ENCODE measurements at regions of chr17 and their contacts with region 1.

Region 1: DNA sequence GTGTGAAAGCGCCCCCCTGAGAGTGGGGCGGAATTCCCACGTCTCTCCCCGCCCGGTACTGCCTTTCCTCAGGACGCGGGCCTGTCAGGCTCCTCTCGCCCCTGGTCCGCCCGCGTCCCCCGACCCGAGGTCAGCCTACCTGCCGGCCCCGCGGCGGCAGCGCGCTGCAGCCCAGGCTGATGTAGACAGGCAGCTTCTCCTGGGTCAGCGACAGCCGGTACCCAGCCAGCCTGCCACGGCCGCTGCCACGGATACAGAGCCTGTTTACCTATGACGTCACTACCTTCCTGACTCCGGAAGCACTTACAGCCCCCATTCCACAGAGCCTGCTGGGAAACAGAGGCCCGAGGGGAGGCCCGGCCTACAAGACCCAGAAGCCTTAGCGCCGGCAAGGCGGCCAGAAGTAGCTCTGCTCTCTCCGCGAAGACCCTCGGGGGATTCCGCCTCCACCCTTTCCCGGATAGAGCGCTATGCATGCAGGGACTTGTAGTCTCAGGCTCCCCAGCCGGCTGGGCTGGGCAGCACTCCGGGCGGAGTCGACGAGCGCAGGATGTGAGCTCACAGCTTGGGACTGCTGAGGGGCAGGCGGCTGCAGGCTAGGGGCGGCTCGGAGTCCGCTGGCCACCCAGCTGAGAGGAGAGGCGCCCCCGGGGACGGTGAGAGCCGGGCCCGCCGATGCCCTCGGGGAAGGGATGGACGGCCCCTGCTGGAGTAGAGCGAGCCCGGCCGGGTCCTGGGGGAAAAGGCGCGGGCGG is at the starts of genes IFT20 and TNFAIP1:
- DNase-seq: peak; percentile 86 to 100 (median 98)
- ATAC-seq: peak; percentile 98
- H3K4me3 ChIP-seq: peak within 1 kb of the TSS; percentile 79
- H3K4me3 Mint-ChIP-seq: peak within 1 kb of the TSS; percentile 86 to 99 (median 97)
- H3K27ac ChIP-seq: peak within 1 kb of the TSS; percentile 95
- H3K27ac Mint-ChIP-seq: peak within 1 kb of the TSS; percentile 91 to 98 (median 97)
- H3K4me1 ChIP-seq: peaks cover 16 to 19% of the 10 kb centered on the region in 2 donors
- H3K4me1 Mint-ChIP-seq: peaks cover 31 to 63% (median 59%) of the 10 kb centered on the region in 7 donors
- H3K27me3 ChIP-seq: no peaks in the 10 kb centered on the region
- H3K27me3 Mint-ChIP-seq: no peaks in the 10 kb centered on the region
- total RNA-seq, gene IFT20: 24.7 to 56.2 (median 37.0) TPM
- total RNA-seq, gene TNFAIP1: 8.0 to 26.9 (median 25.9) TPM

Region 2: GRCh38 chr17:28272166-28272565 is 63.2 kb before region 1 on chr17:
- CTCF ChIA-PET with region 1: no interaction called
- POLR2A ChIA-PET with region 1: no interaction called
- intact Hi-C with region 1: no loop called
- DNase-seq: no peak
- ATAC-seq: no peak
- H3K4me3 ChIP-seq: no peak overlapping the region
- H3K4me3 Mint-ChIP-seq: no peak overlapping the region
- H3K27ac ChIP-seq: no peak overlapping the region
- H3K27ac Mint-ChIP-seq: no peak overlapping the region
- H3K4me1 ChIP-seq: peaks cover 0 to 2% of the 10 kb centered on the region in 2 donors
- H3K4me1 Mint-ChIP-seq: peaks cover 0 to 7% (median 3%) of the 10 kb centered on the region in 7 donors
- H3K27me3 ChIP-seq: no peaks in the 10 kb centered on the region
- H3K27me3 Mint-ChIP-seq: peaks cover 42 to 78% (median 48%) of the 10 kb centered on the region in 5 donors

Region 3: GRCh38 chr17:28282596-28282995 is 52.8 kb before region 1 on chr17:
- CTCF ChIA-PET with region 1: no interaction called
- POLR2A ChIA-PET with region 1: no interaction called
- intact Hi-C with region 1: loop called (anchors 2 kb)
- DNase-seq: no peak
- ATAC-seq: no peak
- H3K4me3 ChIP-seq: no peak overlapping the region
- H3K4me3 Mint-ChIP-seq: no peak overlapping the region
- H3K27ac ChIP-seq: no peak overlapping the region
- H3K27ac Mint-ChIP-seq: no peak overlapping the region
- H3K4me1 ChIP-seq: peaks cover 10 to 11% of the 10 kb centered on the region in 2 donors
- H3K4me1 Mint-ChIP-seq: peaks cover 7 to 12% (median 11%) of the 10 kb centered on the region in 7 donors
- H3K27me3 ChIP-seq: no peaks in the 10 kb centered on the region
- H3K27me3 Mint-ChIP-seq: peaks cover 0 to 62% (median 5%) of the 10 kb centered on the region in 5 donors

Region 4: DNA sequence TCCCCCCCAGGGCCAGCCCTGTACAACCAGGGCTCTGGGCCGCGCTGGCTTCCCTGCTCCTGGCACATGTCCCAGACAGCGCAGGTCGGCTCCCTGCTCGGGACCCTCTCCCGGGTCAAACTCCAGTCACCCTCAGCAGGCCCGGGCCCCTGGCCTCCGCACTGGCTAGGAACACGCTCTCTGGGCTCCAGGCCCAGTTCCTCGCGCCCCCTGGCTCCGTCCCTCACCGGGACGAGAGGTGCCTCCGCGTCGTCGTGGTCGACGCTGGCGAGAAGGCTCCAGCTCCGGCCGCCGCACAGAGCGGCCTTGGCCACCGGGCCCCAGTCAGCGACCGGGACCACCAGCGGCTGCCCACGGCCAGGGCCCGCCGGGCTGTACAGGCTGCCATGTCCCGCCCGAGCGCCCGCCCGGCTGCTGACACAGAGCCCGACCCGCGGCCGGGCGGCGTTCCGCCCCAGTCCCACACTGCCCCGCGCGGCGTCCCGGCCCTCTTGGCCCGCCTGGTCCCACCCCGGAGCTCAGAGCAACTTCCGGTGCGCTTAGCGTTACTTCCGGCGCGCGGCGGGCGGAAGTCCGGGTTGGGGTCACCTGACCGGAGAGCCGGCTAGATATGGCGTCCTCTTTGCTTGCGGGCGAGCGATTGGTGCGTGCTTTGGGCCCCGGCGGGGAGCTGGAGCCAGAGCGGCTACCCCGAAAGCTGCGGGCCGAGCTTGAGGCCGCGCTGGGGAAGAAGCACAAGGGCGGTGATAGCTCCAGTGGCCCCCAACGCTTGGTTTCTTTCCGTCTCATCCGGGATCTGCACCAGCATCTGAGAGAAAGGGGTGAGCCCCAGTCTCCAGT is 21.9 kb after region 1 on chr17 and contains the start of gene POLDIP2:
- CTCF ChIA-PET with region 1: interaction called, 14 read pairs
- POLR2A ChIA-PET with region 1: interaction called, 75 read pairs
- intact Hi-C with region 1: loop called (anchors 1 kb)
- DNase-seq: peak; percentile 94 to 97 (median 96)
- ATAC-seq: peak; percentile 99
- H3K4me3 ChIP-seq: peak within 1 kb of the TSS; percentile 80
- H3K4me3 Mint-ChIP-seq: peak within 1 kb of the TSS; percentile 91 to 98 (median 94)
- H3K27ac ChIP-seq: peak within 1 kb of the TSS; percentile 90
- H3K27ac Mint-ChIP-seq: peak within 1 kb of the TSS; percentile 89 to 97 (median 94)
- H3K4me1 ChIP-seq: peaks cover 17 to 21% of the 10 kb centered on the region in 2 donors
- H3K4me1 Mint-ChIP-seq: peaks cover 19 to 40% (median 29%) of the 10 kb centered on the region in 7 donors
- H3K27me3 ChIP-seq: no peaks in the 10 kb centered on the region
- H3K27me3 Mint-ChIP-seq: no peaks in the 10 kb centered on the region
- total RNA-seq, gene POLDIP2: 27.9 to 64.9 (median 29.8) TPM

Region 5: GRCh38 chr17:28416703-28417311 is 81.4 kb after region 1 on chr17:
- CTCF ChIA-PET with region 1: no interaction called
- POLR2A ChIA-PET with region 1: interaction called, 5 read pairs
- intact Hi-C with region 1: loop called in 1 of 2 experiments (anchors 1 kb)
- DNase-seq: peak; percentile 18 to 58 (median 40)
- ATAC-seq: peak; percentile 89
- H3K4me3 ChIP-seq: no peak overlapping the region
- H3K4me3 Mint-ChIP-seq: peak overlapping the region in 1 of 10 donors; percentile 12
- H3K27ac ChIP-seq: no peak overlapping the region
- H3K27ac Mint-ChIP-seq: no peak overlapping the region
- H3K4me1 ChIP-seq: no peaks in the 10 kb centered on the region
- H3K4me1 Mint-ChIP-seq: peaks cover 0 to 6% (median 4%) of the 10 kb centered on the region in 7 donors
- H3K27me3 ChIP-seq: no peaks in the 10 kb centered on the region
- H3K27me3 Mint-ChIP-seq: peaks cover 0 to 27% (median 8%) of the 10 kb centered on the region in 5 donors

Region 6: DNA sequence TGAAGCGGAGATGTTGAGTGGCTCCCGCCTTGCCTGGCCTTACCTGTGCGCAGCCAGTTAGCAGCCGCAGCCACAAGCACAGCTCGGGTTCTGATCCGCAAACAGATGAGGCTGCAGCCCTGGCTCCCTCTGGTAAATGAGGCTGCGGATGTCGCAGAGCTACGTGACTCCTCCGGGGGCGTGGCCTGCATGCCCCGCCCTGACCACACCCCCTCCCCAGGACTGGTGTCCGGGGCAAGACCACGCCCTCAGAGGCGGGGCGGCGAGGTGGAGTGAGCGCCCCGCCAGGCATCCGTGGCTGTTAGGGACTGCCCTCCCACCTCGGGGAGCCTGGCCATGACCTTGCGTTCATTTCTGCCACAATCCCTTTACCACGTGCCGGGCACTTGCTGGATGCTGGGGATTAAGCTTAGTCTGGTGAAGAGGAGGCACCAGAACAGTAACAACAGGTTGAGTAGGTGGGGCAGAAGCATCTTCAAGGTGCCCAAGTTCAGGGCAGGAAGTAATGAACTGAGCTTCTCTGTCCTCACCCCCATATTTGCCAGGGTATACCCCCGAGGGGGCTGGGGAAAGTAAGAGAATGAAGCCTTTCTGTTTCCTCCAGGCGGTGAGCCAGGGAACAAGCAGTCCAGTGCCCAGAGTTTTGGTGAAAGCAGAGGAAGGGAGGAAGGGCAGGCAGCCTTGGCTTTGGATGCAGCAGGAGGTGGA is 241.5 kb after region 1 on chr17 and contains the start of gene ALDOC:
- CTCF ChIA-PET with region 1: no interaction called
- POLR2A ChIA-PET with region 1: interaction called, 3 read pairs
- intact Hi-C with region 1: loop called in 1 of 2 experiments (anchors 1 kb)
- DNase-seq: peak; percentile 95 to 99 (median 98)
- ATAC-seq: peak; percentile 100
- H3K4me3 ChIP-seq: peak within 1 kb of the TSS; percentile 50
- H3K4me3 Mint-ChIP-seq: peak within 1 kb of the TSS; percentile 83 to 96 (median 86)
- H3K27ac ChIP-seq: peak within 1 kb of the TSS; percentile 52
- H3K27ac Mint-ChIP-seq: peak within 1 kb of the TSS; percentile 79 to 95 (median 89)
- H3K4me1 ChIP-seq: peaks cover 19 to 23% of the 10 kb centered on the region in 2 donors
- H3K4me1 Mint-ChIP-seq: peaks cover 20 to 70% (median 38%) of the 10 kb centered on the region in 7 donors
- H3K27me3 ChIP-seq: no peaks in the 10 kb centered on the region
- H3K27me3 Mint-ChIP-seq: no peaks in the 10 kb centered on the region
- total RNA-seq, gene ALDOC: 24.5 to 159 (median 40.1) TPM

Region 7: DNA sequence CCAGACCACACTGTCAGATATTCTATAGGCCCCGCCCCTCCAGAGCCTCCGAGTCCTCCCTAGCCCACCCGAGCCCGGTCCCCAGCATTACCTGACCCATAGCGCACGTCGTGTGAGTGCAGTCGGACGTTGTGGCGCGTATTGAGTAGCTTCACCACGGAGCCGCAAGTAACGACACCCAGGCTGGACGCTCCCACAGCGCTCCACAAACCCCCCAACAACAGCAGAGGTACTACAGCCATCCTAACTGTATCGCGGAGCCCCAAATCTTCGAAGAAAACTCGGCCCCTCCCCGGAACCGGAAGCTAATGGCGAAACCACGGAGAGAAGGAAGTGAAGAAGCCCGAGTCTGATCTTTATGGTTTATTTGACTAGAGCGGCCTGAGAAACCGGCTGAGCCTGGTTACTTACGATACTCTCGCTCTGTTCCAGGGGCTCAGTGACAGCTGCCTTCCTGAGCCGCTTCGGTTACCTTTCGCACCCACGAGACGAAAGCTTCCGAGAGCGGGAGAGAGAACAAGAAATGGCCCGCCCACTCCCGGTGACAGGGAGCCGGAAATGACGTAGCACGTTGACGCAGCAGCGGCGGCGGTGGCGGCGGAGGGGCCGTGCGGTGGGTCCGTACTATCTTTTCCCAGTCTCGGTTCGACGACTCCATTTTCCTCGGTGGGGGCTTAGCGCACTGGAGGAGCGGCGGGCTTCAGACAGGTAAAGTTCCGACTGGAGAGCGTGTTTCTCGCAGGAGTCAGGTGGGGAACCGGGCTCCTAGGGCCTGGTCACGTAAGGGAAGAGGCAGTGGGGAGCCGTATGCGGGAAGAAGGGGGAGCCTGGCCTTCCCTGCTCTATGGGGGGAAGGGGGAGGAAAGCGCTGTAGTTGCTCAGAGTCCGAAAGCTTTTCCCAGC is 326.5 kb after region 1 on chr17 and contains the starts of genes SDF2 and SUPT6H:
- CTCF ChIA-PET with region 1: no interaction called
- POLR2A ChIA-PET with region 1: no interaction called
- intact Hi-C with region 1: loop called in 1 of 2 experiments (anchors 5 kb)
- DNase-seq: peak; percentile 91 to 97 (median 95)
- ATAC-seq: peak; percentile 91
- H3K4me3 ChIP-seq: peak within 1 kb of the TSS; percentile 72
- H3K4me3 Mint-ChIP-seq: peak within 1 kb of the TSS; percentile 86 to 100 (median 99)
- H3K27ac ChIP-seq: peak within 1 kb of the TSS; percentile 90
- H3K27ac Mint-ChIP-seq: peak within 1 kb of the TSS; percentile 98 to 100 (median 100)
- H3K4me1 ChIP-seq: peaks cover 24 to 35% of the 10 kb centered on the region in 2 donors
- H3K4me1 Mint-ChIP-seq: peaks cover 45 to 73% (median 67%) of the 10 kb centered on the region in 7 donors
- H3K27me3 ChIP-seq: no peaks in the 10 kb centered on the region
- H3K27me3 Mint-ChIP-seq: no peaks in the 10 kb centered on the region
- total RNA-seq, gene SDF2: 28.6 to 49.5 (median 43.8) TPM
- total RNA-seq, gene SUPT6H: 91.2 to 132 (median 98.5) TPM

Measured in naive thymus-derived CD4-positive, alpha-beta T cell (primary cell).